Activated B cell treated with CpG ODN at 0.5 μM for 24 hours (primary cell): ENCODE measurements at regions of chr11 and their contacts with region 1.

Region 1: GRCh38 chr11:75248690-75249268 is 8.2 kb downstream of the TPBGL start:
- DNase-seq: peak; percentile 65
- ATAC-seq: peak; percentile 97
- H3K4me3 Mint-ChIP-seq: no peak overlapping the region
- H3K27ac Mint-ChIP-seq: no peak overlapping the region
- H3K4me1 Mint-ChIP-seq: no peaks in the 10 kb centered on the region
- H3K27me3 Mint-ChIP-seq: peaks cover 24% of the 10 kb centered on the region
- CTCF ChIP-seq: peak; percentile 100

Region 2: GRCh38 chr11:74791333-74792100 is 457.3 kb before region 1 on chr11:
- CTCF ChIA-PET with region 1: no interaction called
- POLR2A ChIA-PET with region 1: no interaction called
- intact Hi-C with region 1: no loop called
- DNase-seq: no peak
- ATAC-seq: no peak
- H3K4me3 Mint-ChIP-seq: no peak overlapping the region
- H3K27ac Mint-ChIP-seq: no peak overlapping the region
- H3K4me1 Mint-ChIP-seq: peaks cover 3% of the 10 kb centered on the region
- H3K27me3 Mint-ChIP-seq: no peaks in the 10 kb centered on the region
- CTCF ChIP-seq: no peak

Region 3: GRCh38 chr11:75022759-75023396 is 225.9 kb before region 1 on chr11:
- CTCF ChIA-PET with region 1: interaction called, 27 read pairs
- POLR2A ChIA-PET with region 1: no interaction called
- intact Hi-C with region 1: loop called (anchors 1 kb)
- DNase-seq: peak; percentile 61
- ATAC-seq: peak; percentile 87
- H3K4me3 Mint-ChIP-seq: no peak overlapping the region
- H3K27ac Mint-ChIP-seq: no peak overlapping the region
- H3K4me1 Mint-ChIP-seq: no peaks in the 10 kb centered on the region
- H3K27me3 Mint-ChIP-seq: no peaks in the 10 kb centered on the region
- CTCF ChIP-seq: peak; percentile 73

Region 4: DNA sequence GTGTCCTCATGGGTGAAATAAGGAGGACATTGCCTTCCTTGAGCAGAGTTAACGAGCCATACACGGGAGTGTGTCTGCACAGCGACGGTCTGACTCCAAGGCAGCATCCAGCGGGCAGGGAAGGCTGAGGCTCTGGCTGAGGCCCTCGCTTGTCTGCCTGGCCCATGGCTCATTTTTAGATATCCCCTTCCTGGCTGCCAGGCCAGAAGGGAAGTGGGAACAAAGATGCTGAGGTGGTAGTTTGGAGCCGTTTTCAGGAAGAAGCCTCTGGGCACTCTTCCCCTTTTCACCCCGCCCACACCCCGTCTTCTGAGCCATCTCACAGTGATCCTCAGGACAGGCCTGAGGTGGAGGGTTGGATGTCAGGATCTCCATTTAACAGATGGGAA is 100.9 kb before region 1 on chr11:
- CTCF ChIA-PET with region 1: interaction called, 125 read pairs
- POLR2A ChIA-PET with region 1: interaction called, 3 read pairs
- intact Hi-C with region 1: loop called (anchors 1 kb)
- DNase-seq: no peak
- ATAC-seq: no peak
- H3K4me3 Mint-ChIP-seq: no peak overlapping the region
- H3K27ac Mint-ChIP-seq: no peak overlapping the region
- H3K4me1 Mint-ChIP-seq: peaks cover 12% of the 10 kb centered on the region
- H3K27me3 Mint-ChIP-seq: peaks cover 15% of the 10 kb centered on the region
- CTCF ChIP-seq: no peak

Region 5: DNA sequence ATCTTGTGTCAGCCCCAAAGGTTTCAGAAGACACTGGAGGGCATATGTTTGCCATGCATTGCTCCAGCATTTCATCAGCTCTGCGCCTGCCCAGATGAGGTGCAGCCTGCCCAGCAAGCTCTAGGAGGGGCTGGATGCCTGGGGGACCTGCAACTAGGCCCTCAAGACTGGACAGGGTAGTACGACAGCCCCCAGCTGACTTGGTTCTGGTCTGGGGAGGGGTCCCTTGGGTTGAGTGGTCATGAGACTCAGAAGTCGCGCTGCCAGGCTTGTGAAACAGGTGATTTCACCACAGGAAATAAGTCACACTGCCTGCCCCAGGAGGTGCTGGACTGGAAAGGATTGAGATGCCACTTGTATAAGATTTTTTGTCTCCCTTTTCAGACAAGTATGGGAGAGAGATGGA is 15.2 kb after region 1 on chr11:
- CTCF ChIA-PET with region 1: interaction called, 19 read pairs
- POLR2A ChIA-PET with region 1: no interaction called
- intact Hi-C with region 1: no loop called
- DNase-seq: no peak
- ATAC-seq: peak; percentile 64
- H3K4me3 Mint-ChIP-seq: peak overlapping the region; percentile 0
- H3K27ac Mint-ChIP-seq: no peak overlapping the region
- H3K4me1 Mint-ChIP-seq: peaks cover 41% of the 10 kb centered on the region
- H3K27me3 Mint-ChIP-seq: no peaks in the 10 kb centered on the region
- CTCF ChIP-seq: no peak

Region 6: GRCh38 chr11:75301601-75302345 is 53.0 kb after region 1 on chr11:
- CTCF ChIA-PET with region 1: no interaction called
- POLR2A ChIA-PET with region 1: no interaction called
- intact Hi-C with region 1: no loop called
- DNase-seq: no peak
- ATAC-seq: no peak
- H3K4me3 Mint-ChIP-seq: no peak overlapping the region
- H3K27ac Mint-ChIP-seq: no peak overlapping the region
- H3K4me1 Mint-ChIP-seq: no peaks in the 10 kb centered on the region
- H3K27me3 Mint-ChIP-seq: peaks cover 5% of the 10 kb centered on the region
- CTCF ChIP-seq: no peak